ENCODE measurements at regions of chr15 and their contacts with region 1.

Region 1: GRCh38 chr15:57561041-57561711 is 30.5 kb upstream of the MYZAP start:
- DNase-seq: peak; percentile 86
- H3K4me3 Mint-ChIP-seq: peak overlapping the region; percentile 7
- H3K27ac Mint-ChIP-seq: peak overlapping the region; percentile 93
- H3K4me1 Mint-ChIP-seq: peaks cover 19% of the 10 kb centered on the region
- H3K27me3 Mint-ChIP-seq: no peaks in the 10 kb centered on the region
- CTCF ChIP-seq: peak; percentile 91

Region 2: DNA sequence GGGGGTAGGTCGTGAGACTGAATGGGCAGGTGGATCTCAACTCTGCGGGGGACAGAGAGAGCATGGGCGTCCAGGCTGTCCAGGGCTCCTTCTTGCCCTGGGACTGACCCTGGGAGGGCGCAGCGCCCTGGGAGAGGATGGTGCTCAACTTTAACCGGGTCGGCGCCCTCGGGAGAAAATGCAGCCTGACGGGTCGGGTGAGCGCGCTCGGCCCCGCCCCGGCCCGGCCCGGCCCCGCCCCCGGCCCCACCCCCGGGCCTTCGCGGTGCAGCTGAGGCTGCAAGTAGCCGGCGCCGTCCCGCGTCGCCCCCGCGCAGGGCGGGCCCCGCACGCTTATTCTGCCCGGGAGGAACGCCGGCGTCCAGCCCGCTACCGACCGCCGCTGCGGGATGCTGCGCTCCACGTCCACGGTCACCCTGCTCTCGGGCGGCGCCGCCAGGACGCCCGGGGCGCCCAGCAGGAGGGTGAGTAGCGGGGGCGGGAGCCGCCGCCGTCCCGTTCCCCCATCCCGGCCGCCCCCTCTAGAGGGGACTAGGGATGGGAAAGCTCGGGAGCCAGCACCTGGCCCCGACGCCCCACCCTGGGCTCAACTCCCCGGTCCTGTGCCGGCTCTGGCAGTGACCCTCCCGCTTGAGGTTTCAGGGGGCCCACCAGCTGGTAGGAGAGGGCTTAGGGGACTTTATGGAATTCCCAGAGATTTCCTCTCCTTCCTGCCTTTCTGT is 30.6 kb after region 1 on chr15 and contains the start of gene MYZAP:
- CTCF ChIA-PET with region 1: interaction called, 4 read pairs
- intact Hi-C with region 1: loop called (anchors 2 kb)
- DNase-seq: peak; percentile 83
- H3K4me3 Mint-ChIP-seq: peak within 1 kb of the TSS; percentile 84
- H3K27ac Mint-ChIP-seq: peak within 1 kb of the TSS; percentile 69
- H3K4me1 Mint-ChIP-seq: peaks cover 47% of the 10 kb centered on the region
- H3K27me3 Mint-ChIP-seq: no peaks in the 10 kb centered on the region
- CTCF ChIP-seq: no peak
- total RNA-seq, gene MYZAP: 5.1 and 6.9 TPM in 2 replicates

Region 3: DNA sequence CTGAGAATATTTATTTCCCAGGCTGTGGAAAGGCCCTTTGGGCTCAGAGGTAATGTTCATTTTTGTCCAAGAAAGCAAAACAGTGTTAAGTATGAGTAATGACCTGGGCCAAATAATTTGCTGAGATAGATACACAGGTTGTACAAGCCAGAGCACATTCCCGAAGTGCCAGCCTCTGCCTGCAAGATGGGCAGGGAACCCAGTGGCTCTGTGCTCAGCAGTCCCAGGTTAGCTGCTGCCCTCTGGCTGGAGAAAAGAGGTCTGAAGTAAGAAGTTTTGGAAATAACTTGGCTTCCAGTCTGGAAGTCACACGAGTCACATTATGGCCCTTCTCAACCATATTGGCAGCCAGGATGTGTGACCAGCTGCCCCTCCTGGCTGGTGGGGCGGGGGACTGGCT is 50.8 kb after region 1 on chr15:
- CTCF ChIA-PET with region 1: interaction called, 43 read pairs
- intact Hi-C with region 1: loop called (anchors 1 kb)
- DNase-seq: peak; percentile 85
- H3K4me3 Mint-ChIP-seq: no peak overlapping the region
- H3K27ac Mint-ChIP-seq: peak overlapping the region; percentile 38
- H3K4me1 Mint-ChIP-seq: peaks cover 66% of the 10 kb centered on the region
- H3K27me3 Mint-ChIP-seq: no peaks in the 10 kb centered on the region
- CTCF ChIP-seq: peak; percentile 61

Region 4: GRCh38 chr15:57640935-57641682 is 79.9 kb after region 1 on chr15:
- CTCF ChIA-PET with region 1: no interaction called
- intact Hi-C with region 1: loop called (anchors 1 kb)
- DNase-seq: peak; percentile 64
- H3K4me3 Mint-ChIP-seq: no peak overlapping the region
- H3K27ac Mint-ChIP-seq: no peak overlapping the region
- H3K4me1 Mint-ChIP-seq: no peaks in the 10 kb centered on the region
- H3K27me3 Mint-ChIP-seq: no peaks in the 10 kb centered on the region
- CTCF ChIP-seq: peak; percentile 25

Region 5: DNA sequence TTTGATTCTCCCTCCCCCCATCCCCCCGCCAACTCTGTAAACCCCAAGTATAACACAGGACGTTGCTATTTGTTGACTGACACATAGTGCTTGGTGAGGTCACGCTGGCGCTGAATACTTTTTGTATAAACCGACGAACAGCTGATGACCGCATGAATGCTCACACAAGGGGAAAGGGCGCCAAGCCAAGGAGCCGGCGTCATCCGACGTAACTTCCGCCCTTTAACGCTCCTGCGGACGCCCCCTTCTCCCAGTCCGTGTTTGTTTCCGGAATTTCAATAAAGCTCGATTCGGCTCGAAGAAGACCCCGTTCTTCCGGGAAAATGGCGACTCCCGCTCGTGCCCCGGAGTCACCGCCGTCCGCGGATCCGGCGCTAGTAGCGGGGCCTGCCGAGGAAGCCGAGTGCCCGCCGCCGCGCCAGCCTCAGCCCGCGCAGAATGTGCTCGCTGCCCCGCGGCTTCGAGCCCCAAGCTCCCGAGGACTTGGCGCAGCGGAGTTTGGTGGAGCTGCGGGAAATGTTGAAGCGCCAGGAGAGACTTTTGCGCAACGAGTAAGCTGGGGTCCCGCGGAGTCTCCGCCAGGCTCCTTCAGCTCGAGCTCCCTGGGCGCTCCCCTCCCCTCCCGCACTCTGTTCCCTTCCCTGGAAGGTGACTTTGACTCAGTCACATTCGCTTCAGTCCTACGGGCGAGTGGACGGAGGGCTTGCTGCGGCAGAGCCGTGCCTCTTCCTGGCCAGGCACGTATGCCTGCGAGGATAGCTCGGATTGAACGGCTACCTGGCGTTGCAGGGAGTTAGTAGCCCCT is 145.4 kb after region 1 on chr15 and contains the start of gene POLR2M:
- CTCF ChIA-PET with region 1: interaction called, 8 read pairs
- intact Hi-C with region 1: loop called (anchors 5 kb)
- DNase-seq: peak; percentile 96
- H3K4me3 Mint-ChIP-seq: peak within 1 kb of the TSS; percentile 78
- H3K27ac Mint-ChIP-seq: peak within 1 kb of the TSS; percentile 63
- H3K4me1 Mint-ChIP-seq: peaks cover 34% of the 10 kb centered on the region
- H3K27me3 Mint-ChIP-seq: no peaks in the 10 kb centered on the region
- CTCF ChIP-seq: no peak
- total RNA-seq, gene POLR2M: 102 and 107 TPM in 2 replicates

Region 6: GRCh38 chr15:57861036-57861638 is 300.0 kb after region 1 on chr15:
- CTCF ChIA-PET with region 1: interaction called, 5 read pairs
- intact Hi-C with region 1: loop called (anchors 1 kb)
- DNase-seq: peak; percentile 61
- H3K4me3 Mint-ChIP-seq: no peak overlapping the region
- H3K27ac Mint-ChIP-seq: no peak overlapping the region
- H3K4me1 Mint-ChIP-seq: peaks cover 5% of the 10 kb centered on the region
- H3K27me3 Mint-ChIP-seq: peaks cover 21% of the 10 kb centered on the region
- CTCF ChIP-seq: peak; percentile 56

Region 7: GRCh38 chr15:58182460-58183163 is 621.4 kb after region 1 on chr15:
- CTCF ChIA-PET with region 1: no interaction called
- intact Hi-C with region 1: loop called (anchors 10 kb)
- DNase-seq: peak; percentile 71
- H3K4me3 Mint-ChIP-seq: no peak overlapping the region
- H3K27ac Mint-ChIP-seq: no peak overlapping the region
- H3K4me1 Mint-ChIP-seq: no peaks in the 10 kb centered on the region
- H3K27me3 Mint-ChIP-seq: peaks cover 36% of the 10 kb centered on the region
- CTCF ChIP-seq: peak; percentile 93

Measured in Calu3 (cell line).